Dorsolateral prefrontal cortex (tissue), 120 donors: ENCODE measurements at regions of chr22 and their contacts with region 1.

Region 1: GRCh38 chr22:32474635-32475467 is at the start of gene FBXO7:
- DNase-seq: peak; percentile 69 to 95 (median 90)
- H3K4me3 ChIP-seq: peak within 1 kb of the TSS; percentile 65 to 99 (median 92)
- H3K27ac ChIP-seq: peak within 1 kb of the TSS; percentile 97 to 100 (median 99)
- H3K27me3 ChIP-seq: no peaks in the 10 kb centered on the region
- CTCF ChIP-seq: peak in 55 of 56 donors; percentile 10 to 78 (median 42)
- total RNA-seq, gene FBXO7: 54.1 to 217 (median 85.7) TPM

Region 2: GRCh38 chr22:31943976-31944699 is 530.7 kb before region 1 on chr22 and contains the start of gene YWHAH:
- intact Hi-C with region 1: loop called in 1 of 2 experiments (anchors 10 kb)
- DNase-seq: peak; percentile 88 to 97 (median 94)
- H3K4me3 ChIP-seq: peak within 1 kb of the TSS; percentile 56 to 99 (median 91)
- H3K27ac ChIP-seq: peak within 1 kb of the TSS; percentile 92 to 100 (median 99)
- H3K27me3 ChIP-seq: no peaks in the 10 kb centered on the region
- CTCF ChIP-seq: peak in 22 of 56 donors; percentile 8 to 49 (median 23)
- total RNA-seq, gene YWHAH: 191 to 1,478 (median 946) TPM

Region 3: GRCh38 chr22:32144496-32145274 is 330.2 kb before region 1 on chr22:
- intact Hi-C with region 1: loop called in 1 of 2 experiments (anchors 5 kb)
- DNase-seq: no peak
- H3K4me3 ChIP-seq: no peak overlapping the region
- H3K27ac ChIP-seq: no peak overlapping the region
- H3K27me3 ChIP-seq: no peaks in the 10 kb centered on the region
- CTCF ChIP-seq: no peak

Region 4: GRCh38 chr22:32528984-32529982 is 54.4 kb after region 1 on chr22:
- intact Hi-C with region 1: loop called (anchors 2 kb)
- DNase-seq: peak; percentile 70 to 93 (median 88)
- H3K4me3 ChIP-seq: peak overlapping the region in 57 of 59 donors; percentile 4 to 65 (median 40)
- H3K27ac ChIP-seq: peak overlapping the region; percentile 42 to 98 (median 90)
- H3K27me3 ChIP-seq: no peaks in the 10 kb centered on the region
- CTCF ChIP-seq: peak; percentile 86 to 98 (median 95)

Region 5: GRCh38 chr22:32991353-32992121 is 516.7 kb after region 1 on chr22:
- intact Hi-C with region 1: loop called in 1 of 2 experiments (anchors 10 kb)
- DNase-seq: no peak
- H3K4me3 ChIP-seq: no peak overlapping the region
- H3K27ac ChIP-seq: peak overlapping the region in 12 of 59 donors; percentile 9 to 67 (median 30)
- H3K27me3 ChIP-seq: no peaks in the 10 kb centered on the region
- CTCF ChIP-seq: no peak